MCF 10A (cell line): ENCODE measurements at regions of chr9 and their contacts with region 1.

Region 1: DNA sequence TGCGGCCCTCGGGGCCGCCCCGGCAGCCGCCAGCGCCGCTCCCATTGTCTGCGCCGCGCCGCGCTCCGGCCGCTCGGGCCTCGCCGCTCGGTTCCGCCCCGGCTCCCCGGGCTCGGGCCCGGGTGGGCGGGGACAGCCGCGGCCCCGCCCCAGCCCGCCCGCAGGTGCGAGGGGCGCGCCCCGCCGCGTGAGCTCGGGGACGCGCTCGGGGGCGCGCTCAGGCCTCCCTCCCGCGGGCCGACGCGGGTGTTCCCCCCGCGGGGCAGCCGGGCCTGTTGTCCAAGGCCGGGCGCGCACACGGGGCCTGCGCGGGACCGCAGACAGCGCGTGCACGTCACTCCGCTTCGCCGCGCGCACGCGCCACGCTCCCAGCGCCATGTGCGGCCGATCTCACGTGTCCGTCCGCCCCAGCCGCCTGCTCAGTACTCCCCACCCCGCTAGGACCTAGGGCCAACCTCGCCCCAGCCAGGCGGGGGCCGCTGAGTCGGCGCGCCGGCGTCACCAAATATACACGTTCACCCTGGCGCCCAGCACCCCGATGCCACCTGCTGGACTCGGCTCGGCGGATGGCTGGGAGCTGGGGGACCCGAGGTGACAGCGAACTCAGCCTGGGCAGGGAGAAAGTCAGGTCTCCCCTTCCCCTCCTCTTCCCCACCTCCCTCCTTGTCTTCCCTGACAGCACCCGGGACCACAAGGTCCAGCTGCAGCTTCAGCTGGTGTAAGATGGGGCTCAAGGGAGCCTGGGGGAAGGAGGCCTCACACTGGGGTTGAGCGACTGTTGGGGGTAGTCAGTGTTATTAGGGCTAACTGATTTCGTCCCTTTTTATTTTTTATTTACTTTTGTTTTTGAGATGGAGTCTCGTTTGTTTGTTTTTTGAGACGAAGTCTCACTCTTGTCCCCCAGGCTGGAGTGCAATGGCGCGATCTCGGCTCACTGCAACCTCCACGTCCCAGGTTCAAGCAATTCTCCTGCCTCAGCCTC is 14.3 kb downstream of the GBGT1 start:
- DNase-seq: peak; percentile 85
- H3K4me3 Mint-ChIP-seq: peak overlapping the region; percentile 69
- H3K27ac Mint-ChIP-seq: peak overlapping the region; percentile 83
- H3K4me1 Mint-ChIP-seq: peaks cover 18% of the 10 kb centered on the region
- H3K27me3 Mint-ChIP-seq: no peaks in the 10 kb centered on the region
- CTCF ChIP-seq: peak; percentile 28

Region 2: GRCh38 chr9:132973713-132974112 is 175.7 kb before region 1 on chr9:
- CTCF ChIA-PET with region 1: interaction called, 5 read pairs
- POLR2A ChIA-PET with region 1: interaction called, 3 read pairs
- intact Hi-C with region 1: loop called (anchors 5 kb)
- DNase-seq: peak; percentile 11
- H3K4me3 Mint-ChIP-seq: no peak overlapping the region
- H3K27ac Mint-ChIP-seq: no peak overlapping the region
- H3K4me1 Mint-ChIP-seq: peaks cover 5% of the 10 kb centered on the region
- H3K27me3 Mint-ChIP-seq: peaks cover 66% of the 10 kb centered on the region
- CTCF ChIP-seq: no peak

Region 3: DNA sequence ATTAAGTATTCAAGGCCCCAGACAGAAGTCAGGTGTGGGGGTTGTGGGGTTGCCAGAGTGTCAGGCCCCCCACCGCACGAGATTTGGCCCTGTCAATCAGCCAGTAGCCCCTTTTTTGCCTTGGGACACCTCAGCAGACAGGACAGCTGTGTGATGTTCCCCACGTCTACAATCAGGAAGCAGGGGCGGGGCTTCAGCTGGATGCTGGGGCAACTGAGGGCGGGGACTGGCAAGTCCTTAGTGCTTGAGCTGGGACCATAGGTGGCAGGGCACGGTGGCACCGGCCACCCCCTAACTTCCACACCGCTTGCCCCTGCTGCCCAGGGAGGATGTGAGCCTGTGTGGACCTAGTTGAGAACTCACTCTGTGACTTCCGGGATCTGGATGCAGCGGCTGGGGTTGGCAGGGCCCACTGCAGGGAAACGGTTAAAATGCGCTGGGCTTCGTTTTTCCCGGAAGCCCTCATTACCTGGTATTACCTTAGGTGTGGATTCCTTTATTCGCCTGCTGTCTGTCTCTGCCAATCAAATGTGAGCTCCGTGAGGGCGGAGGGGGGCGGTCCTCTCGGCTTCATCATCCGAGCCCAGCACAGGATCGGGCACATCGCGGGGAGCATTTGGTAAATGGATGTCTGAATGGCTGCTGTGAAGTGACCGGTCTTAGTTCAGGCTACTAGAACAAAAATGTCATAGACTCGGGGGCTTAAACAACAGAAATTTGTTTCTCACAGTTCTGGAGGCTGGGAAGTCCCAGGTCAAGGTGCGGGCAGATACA is 126.1 kb before region 1 on chr9:
- CTCF ChIA-PET with region 1: interaction called, 6 read pairs
- POLR2A ChIA-PET with region 1: interaction called, 10 read pairs
- intact Hi-C with region 1: no loop called
- DNase-seq: no peak
- H3K4me3 Mint-ChIP-seq: no peak overlapping the region
- H3K27ac Mint-ChIP-seq: no peak overlapping the region
- H3K4me1 Mint-ChIP-seq: no peaks in the 10 kb centered on the region
- H3K27me3 Mint-ChIP-seq: no peaks in the 10 kb centered on the region
- CTCF ChIP-seq: no peak

Region 4: GRCh38 chr9:133048569-133048968 is 100.8 kb before region 1 on chr9:
- CTCF ChIA-PET with region 1: interaction called, 13 read pairs
- POLR2A ChIA-PET with region 1: interaction called, 5 read pairs
- intact Hi-C with region 1: loop called (anchors 1 kb)
- DNase-seq: no peak
- H3K4me3 Mint-ChIP-seq: no peak overlapping the region
- H3K27ac Mint-ChIP-seq: no peak overlapping the region
- H3K4me1 Mint-ChIP-seq: no peaks in the 10 kb centered on the region
- H3K27me3 Mint-ChIP-seq: no peaks in the 10 kb centered on the region
- CTCF ChIP-seq: peak; percentile 36

Region 5: DNA sequence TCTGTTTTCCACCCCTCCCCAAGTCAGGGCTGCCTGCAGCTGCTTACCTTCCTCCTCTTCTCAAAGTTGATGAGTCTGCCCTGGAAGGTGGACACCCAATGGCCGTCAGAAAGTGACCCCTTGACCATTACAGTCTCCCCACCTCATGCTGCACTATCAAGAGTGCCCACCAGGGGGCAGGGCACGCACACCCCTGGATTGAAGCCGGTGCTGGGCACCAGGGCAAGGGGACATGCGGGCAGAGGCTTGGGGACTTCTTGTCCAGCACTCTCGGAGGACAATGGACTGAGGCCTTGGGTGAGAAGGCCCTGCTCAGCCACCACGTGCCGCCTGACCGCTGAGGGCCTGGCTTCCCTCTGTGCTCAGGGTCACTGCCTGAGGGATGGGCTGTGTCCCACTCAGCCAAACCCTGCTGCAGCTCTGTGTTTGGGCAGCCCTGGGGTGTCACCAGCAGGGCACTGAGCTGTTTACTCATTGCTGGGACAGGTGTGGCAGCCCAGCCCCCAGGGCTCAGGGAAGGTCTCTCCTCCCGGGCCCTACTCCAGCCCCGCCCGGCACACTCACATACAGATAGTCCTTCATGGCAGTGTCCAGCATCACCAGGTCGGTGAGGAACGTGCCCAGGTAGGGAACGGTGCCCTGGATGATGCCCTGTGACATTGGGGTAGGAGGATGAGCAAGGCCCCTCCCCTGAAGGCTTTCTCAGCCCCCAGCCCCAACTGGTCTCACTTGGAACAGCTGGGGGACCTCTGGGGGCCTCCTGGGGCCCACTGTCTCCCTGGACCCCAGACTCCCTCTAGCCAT is 46.0 kb before region 1 on chr9:
- CTCF ChIA-PET with region 1: interaction called, 183 read pairs
- POLR2A ChIA-PET with region 1: interaction called, 3 read pairs
- intact Hi-C with region 1: loop called (anchors 1 kb)
- DNase-seq: peak; percentile 58
- H3K4me3 Mint-ChIP-seq: no peak overlapping the region
- H3K27ac Mint-ChIP-seq: peak overlapping the region; percentile 75
- H3K4me1 Mint-ChIP-seq: no peaks in the 10 kb centered on the region
- H3K27me3 Mint-ChIP-seq: no peaks in the 10 kb centered on the region
- CTCF ChIP-seq: peak; percentile 95

Region 6: DNA sequence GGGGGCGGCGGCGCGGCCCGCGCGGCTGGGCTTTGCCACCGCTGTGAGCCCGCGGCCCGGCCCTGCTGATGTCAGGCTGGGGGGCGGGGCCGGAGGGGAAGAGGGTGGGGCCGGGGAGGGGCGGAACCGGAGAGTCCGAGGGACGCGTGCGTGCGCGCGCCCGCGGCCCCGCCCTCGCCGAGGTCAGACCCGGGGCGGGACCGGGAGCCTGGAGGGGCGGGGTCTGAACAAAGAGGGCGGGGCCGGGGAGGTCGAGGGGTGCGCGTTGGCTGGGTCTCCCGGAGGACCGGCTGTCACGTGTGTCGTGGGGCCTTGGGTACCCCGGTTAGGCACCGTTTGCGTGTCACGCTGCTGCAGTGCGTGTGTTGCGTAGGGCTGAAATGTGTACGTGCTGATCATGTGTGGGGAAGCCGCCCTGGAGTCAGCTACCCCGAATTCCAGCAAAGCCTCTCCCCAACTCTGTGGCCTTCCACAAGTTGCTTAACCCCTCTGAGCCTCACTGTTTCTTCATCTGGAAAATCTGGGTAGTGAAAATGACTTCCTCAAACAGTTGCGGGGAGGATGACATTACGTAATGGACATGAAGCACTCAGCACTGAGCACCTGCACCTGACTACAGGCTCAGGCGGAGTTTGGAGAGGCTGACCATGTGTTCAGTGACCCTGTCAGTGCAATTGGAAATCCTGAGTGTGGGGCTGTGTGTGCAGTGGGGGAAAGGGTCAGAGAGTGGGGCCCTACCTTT is 28.0 kb before region 1 on chr9 and contains the start of gene RALGDS:
- CTCF ChIA-PET with region 1: interaction called, 132 read pairs
- POLR2A ChIA-PET with region 1: interaction called, 15 read pairs
- intact Hi-C with region 1: loop called (anchors 2 kb)
- DNase-seq: peak; percentile 88
- H3K4me3 Mint-ChIP-seq: peak within 1 kb of the TSS; percentile 66
- H3K27ac Mint-ChIP-seq: peak within 1 kb of the TSS; percentile 54
- H3K4me1 Mint-ChIP-seq: peaks cover 22% of the 10 kb centered on the region
- H3K27me3 Mint-ChIP-seq: no peaks in the 10 kb centered on the region
- CTCF ChIP-seq: no peak
- total RNA-seq, gene RALGDS: 14.2 and 15.4 TPM in 2 replicates

Region 7: DNA sequence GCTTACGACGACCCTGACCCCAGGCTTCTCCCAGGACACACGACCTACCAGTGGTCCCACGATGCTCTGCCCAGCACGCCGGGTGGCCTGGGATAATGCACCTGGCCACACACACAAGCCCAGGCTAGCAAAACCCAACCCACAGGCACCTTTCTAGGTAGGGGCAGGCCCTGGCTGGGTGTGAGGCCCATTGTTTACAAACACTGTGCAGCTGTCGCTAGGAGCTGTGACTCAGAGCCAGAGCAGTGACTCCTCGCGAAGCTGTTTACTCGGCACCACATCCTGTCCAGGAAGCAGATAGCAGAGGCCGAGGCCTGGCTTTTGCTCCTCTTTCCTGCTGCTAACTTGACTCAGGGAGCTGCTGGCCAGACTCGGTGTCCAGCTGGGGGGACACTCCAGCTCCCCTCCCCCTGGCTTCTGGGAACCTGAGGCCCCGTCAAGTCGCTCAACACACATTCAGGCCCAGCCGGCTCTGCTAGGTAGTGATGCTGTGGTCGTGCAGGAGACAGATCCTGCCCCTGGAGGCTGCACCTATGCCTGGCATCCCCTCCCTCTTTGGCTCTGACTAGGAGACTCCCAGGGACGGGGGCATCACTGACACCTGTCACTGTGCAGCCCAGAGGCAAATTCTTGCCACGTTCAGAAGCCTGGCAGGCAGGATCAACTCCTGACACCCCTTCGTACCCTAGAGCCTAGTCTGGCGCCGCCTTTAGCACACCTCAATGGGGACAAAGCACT is 15.6 kb before region 1 on chr9:
- CTCF ChIA-PET with region 1: interaction called, 119 read pairs
- POLR2A ChIA-PET with region 1: interaction called, 53 read pairs
- intact Hi-C with region 1: no loop called
- DNase-seq: peak; percentile 98
- H3K4me3 Mint-ChIP-seq: peak overlapping the region; percentile 44
- H3K27ac Mint-ChIP-seq: peak overlapping the region; percentile 98
- H3K4me1 Mint-ChIP-seq: peaks cover 27% of the 10 kb centered on the region
- H3K27me3 Mint-ChIP-seq: no peaks in the 10 kb centered on the region
- CTCF ChIP-seq: no peak